Gastrocnemius medialis (tissue), 4 donors: ENCODE measurements at regions of chr17 and their contacts with region 1.

Region 1: GRCh38 chr17:57995076-57995956 is 7.3 kb upstream of the VEZF1 start:
- DNase-seq: peak; percentile 80 to 93
- ATAC-seq: peak; percentile 92 to 93
- H3K4me3 ChIP-seq: no peak overlapping the region
- H3K27ac ChIP-seq: peak overlapping the region; percentile 79 to 99 (median 98)
- H3K4me1 ChIP-seq: peaks cover 63 to 70% of the 10 kb centered on the region in 2 donors
- H3K27me3 ChIP-seq: no peaks in the 10 kb centered on the region
- CTCF ChIP-seq: peak; percentile 61 to 84 (median 75)
- POLR2A ChIP-seq: no peak

Region 2: GRCh38 chr17:57597531-57598453 is 397.5 kb before region 1 on chr17:
- in situ Hi-C with region 1: loop called in 1 of 4 experiments (anchors 25 kb)
- intact Hi-C with region 1: loop called (anchors 10 kb)
- DNase-seq: peak in 1 of 2 donors; percentile 66
- ATAC-seq: peak; percentile 60 to 85
- H3K4me3 ChIP-seq: no peak overlapping the region
- H3K27ac ChIP-seq: peak overlapping the region; percentile 37 to 65 (median 58)
- H3K4me1 ChIP-seq: peaks cover 18 to 19% of the 10 kb centered on the region in 2 donors
- H3K27me3 ChIP-seq: no peaks in the 10 kb centered on the region
- CTCF ChIP-seq: peak; percentile 66 to 85 (median 74)
- POLR2A ChIP-seq: no peak